ENCODE measurements at regions of chr5 and their contacts with region 1.

Region 1: GRCh38 chr5:9361835-9362234 is 184.0 kb downstream of the SEMA5A start:
- DNase-seq: no peak

Region 2: GRCh38 chr5:8686707-8687106 is 675.1 kb before region 1 on chr5:
- intact Hi-C with region 1: no loop called
- DNase-seq: no peak

Region 3: GRCh38 chr5:9381464-9381863 is 19.6 kb after region 1 on chr5:
- intact Hi-C with region 1: no loop called
- DNase-seq: no peak

Region 4: DNA sequence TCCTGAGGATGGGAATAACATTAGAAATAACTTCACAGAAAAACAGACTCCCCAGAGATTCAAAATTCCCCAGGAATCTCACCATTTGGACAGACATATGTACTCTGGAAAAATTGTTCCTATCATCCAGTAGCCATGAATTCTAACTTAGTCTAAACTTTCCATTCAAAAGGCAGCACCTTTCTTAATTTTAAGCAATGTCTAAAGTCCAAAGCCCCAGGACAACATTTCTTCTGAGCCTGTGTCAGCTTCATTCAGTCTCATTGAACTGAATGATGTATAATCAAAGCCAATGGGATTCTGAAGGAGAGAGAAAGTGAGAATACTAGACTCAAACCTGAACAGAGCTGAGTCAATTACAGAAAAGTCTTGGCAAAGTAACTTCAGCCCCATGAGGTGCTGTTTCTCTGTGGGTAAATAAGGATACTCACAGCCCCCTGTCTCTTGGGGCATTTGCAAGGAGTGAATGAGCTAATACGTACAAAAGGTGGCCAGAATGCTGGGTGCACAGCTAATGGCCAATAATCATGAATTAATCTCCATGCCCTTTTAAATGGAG is 43.4 kb after region 1 on chr5:
- intact Hi-C with region 1: loop called (anchors 5 kb)
- DNase-seq: no peak

Region 5: DNA sequence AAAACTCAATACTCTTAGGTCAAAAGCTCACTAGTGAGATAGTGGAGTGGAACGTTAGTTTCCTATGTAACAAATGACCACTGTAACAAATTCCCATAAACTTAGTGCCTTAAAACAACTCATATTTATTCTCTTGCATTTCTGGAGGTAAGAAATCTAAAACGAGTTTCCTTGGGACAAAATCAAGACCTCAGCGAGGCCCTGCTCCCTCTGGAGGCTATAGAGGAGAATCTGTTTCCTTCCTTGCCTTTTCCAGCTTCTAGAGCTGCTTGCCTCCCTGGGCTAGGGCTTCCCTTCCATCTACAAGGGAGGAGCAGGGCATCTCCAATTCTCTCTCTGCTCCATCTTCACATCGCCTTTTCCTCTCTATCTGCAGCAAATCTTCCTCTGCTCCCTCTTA is 152.0 kb after region 1 on chr5:
- intact Hi-C with region 1: loop called (anchors 10 kb)
- DNase-seq: no peak

Region 6: GRCh38 chr5:9617221-9617620 is 255.4 kb after region 1 on chr5:
- intact Hi-C with region 1: loop called (anchors 10 kb)
- DNase-seq: no peak